Activated CD4-positive, alpha-beta memory T cell treated with anti-CD3 and anti-CD28 coated beads for 36 hours (primary cell): ENCODE measurements at regions of chr3 and their contacts with region 1.

Region 1: GRCh38 chr3:32374788-32375595 is 16.7 kb upstream of the CMTM7 start:
- DNase-seq: peak; percentile 67
- H3K4me3 Mint-ChIP-seq: peak overlapping the region; percentile 5
- H3K27ac Mint-ChIP-seq: peak overlapping the region; percentile 53
- H3K4me1 Mint-ChIP-seq: peaks cover 23% of the 10 kb centered on the region
- H3K27me3 Mint-ChIP-seq: no peaks in the 10 kb centered on the region

Region 2: DNA sequence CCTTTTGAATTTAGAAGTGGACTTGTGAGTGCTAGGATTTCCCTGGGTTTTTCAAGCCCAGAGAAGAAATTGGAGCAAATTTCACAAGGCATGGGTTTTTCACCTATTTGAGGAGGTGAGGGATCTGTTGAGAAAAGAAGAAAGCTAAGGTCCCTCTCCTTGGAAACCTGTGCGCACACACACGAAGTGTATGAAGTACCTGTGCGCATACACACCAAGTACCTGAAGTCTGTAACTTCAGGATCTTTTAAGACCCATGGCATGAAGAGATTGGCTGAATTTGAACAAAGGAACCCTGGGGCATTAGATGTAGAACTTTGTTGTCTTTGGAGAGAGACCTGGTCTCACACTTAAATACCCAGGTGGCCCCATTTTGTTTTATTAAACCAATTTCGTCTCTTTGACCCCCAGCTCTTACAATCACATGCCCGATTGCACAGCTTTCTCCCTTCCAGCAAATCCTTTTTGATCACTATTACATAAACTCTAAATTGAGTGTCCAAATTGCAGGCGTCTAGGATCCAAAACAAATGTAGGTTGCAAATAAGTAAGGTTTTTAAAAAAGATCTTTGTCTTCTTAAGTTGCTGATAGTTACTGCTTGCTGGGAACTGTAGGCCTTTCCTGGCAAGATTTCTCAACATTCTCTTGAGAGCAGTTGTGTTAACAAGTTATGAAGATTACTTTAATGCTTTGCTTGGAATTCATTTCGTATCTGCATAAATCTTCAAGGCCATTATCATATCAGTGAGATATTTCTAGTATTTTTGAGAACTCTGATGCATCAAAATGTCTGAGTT is 72.2 kb before region 1 on chr3:
- CTCF ChIA-PET with region 1: interaction called, 27 read pairs
- POLR2A ChIA-PET with region 1: no interaction called
- intact Hi-C with region 1: loop called (anchors 2 kb)
- DNase-seq: no peak
- H3K4me3 Mint-ChIP-seq: peak overlapping the region; percentile 60
- H3K27ac Mint-ChIP-seq: peak overlapping the region; percentile 86
- H3K4me1 Mint-ChIP-seq: peaks cover 66% of the 10 kb centered on the region
- H3K27me3 Mint-ChIP-seq: no peaks in the 10 kb centered on the region

Region 3: GRCh38 chr3:32391643-32392535 is 16.9 kb after region 1 on chr3 and contains the start of gene CMTM7:
- CTCF ChIA-PET with region 1: interaction called, 101 read pairs
- POLR2A ChIA-PET with region 1: interaction called, 11 read pairs
- intact Hi-C with region 1: loop called (anchors 1 kb)
- DNase-seq: peak; percentile 81
- H3K4me3 Mint-ChIP-seq: peak within 1 kb of the TSS; percentile 98
- H3K27ac Mint-ChIP-seq: peak within 1 kb of the TSS; percentile 95
- H3K4me1 Mint-ChIP-seq: peaks cover 55% of the 10 kb centered on the region
- H3K27me3 Mint-ChIP-seq: no peaks in the 10 kb centered on the region
- total RNA-seq, gene CMTM7: 46.1 to 47.1 TPM

Region 4: GRCh38 chr3:32401556-32402081 is 26.6 kb after region 1 on chr3:
- CTCF ChIA-PET with region 1: interaction called, 101 read pairs
- POLR2A ChIA-PET with region 1: interaction called, 11 read pairs
- intact Hi-C with region 1: loop called (anchors 1 kb)
- DNase-seq: peak; percentile 74
- H3K4me3 Mint-ChIP-seq: peak overlapping the region; percentile 85
- H3K27ac Mint-ChIP-seq: peak overlapping the region; percentile 99
- H3K4me1 Mint-ChIP-seq: peaks cover 58% of the 10 kb centered on the region
- H3K27me3 Mint-ChIP-seq: no peaks in the 10 kb centered on the region

Region 5: GRCh38 chr3:32420126-32421038 is 45.4 kb after region 1 on chr3:
- CTCF ChIA-PET with region 1: interaction called, 12 read pairs
- POLR2A ChIA-PET with region 1: no interaction called
- intact Hi-C with region 1: no loop called
- DNase-seq: peak; percentile 72
- H3K4me3 Mint-ChIP-seq: peak overlapping the region; percentile 38
- H3K27ac Mint-ChIP-seq: peak overlapping the region; percentile 91
- H3K4me1 Mint-ChIP-seq: peaks cover 89% of the 10 kb centered on the region
- H3K27me3 Mint-ChIP-seq: no peaks in the 10 kb centered on the region

Region 6: GRCh38 chr3:32460031-32460749 is 85.2 kb after region 1 on chr3:
- CTCF ChIA-PET with region 1: interaction called, 11 read pairs
- POLR2A ChIA-PET with region 1: no interaction called
- intact Hi-C with region 1: no loop called
- DNase-seq: peak; percentile 86
- H3K4me3 Mint-ChIP-seq: peak overlapping the region; percentile 63
- H3K27ac Mint-ChIP-seq: no peak overlapping the region
- H3K4me1 Mint-ChIP-seq: peaks cover 31% of the 10 kb centered on the region
- H3K27me3 Mint-ChIP-seq: no peaks in the 10 kb centered on the region